Heart right ventricle (tissue), 16 donors: ENCODE measurements at regions of chr1 and their contacts with region 1.

Region 1: DNA sequence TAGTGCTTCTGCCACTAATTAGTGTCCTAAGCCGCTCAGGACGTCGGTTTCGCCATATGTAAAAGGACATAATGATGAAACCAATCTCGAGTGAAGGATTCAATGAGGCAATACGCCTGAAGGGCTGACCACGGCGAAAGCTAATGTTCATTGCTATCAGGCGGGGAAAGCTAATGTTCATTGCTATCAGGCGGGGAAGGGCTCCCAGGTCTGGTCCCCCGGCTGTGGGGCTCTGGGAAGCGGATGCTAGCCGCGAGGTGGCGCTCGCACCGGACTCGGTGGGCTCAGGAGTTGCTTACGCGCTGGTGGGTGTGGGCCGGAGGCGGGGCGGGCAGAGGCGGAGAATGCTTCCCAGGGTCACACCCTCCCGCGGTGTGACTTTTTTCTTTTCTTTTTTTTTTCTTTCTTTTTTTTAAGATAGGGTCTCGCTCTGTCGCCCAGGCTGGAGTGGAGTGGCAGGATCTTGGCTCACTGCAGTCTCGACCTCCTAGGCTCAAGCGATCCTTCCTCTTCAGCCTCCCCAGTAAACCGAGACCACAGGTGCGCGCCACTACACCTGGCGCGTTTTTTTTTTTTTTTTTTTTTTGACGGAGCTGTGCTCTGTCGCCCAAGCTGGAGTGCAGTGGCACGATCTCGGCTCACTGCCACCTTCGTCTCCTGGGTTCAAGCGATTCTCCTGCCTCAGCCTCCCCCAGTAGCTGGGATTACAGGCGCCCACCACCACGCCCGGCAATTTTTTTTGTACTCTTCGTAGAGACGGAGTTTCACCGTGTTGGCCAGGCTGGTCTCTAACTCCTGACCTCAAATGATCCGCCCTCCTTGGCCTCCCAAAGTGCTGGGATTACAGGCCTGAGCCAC is 1.1 kb upstream of the PEAR1 start:
- DNase-seq: peak; percentile 94 to 95
- ATAC-seq: peak; percentile 84 to 91 (median 88)
- H3K4me3 ChIP-seq: peak overlapping the region; percentile 10 to 82 (median 68)
- H3K27ac ChIP-seq: peak overlapping the region; percentile 9 to 98 (median 93)
- H3K4me1 ChIP-seq: peaks cover 12 to 56% (median 45%) of the 10 kb centered on the region in 9 donors
- H3K27me3 ChIP-seq: peaks cover 0 to 43% (median 9%) of the 10 kb centered on the region in 7 donors
- CTCF ChIP-seq: peak; percentile 82 to 98 (median 89)

Region 2: GRCh38 chr1:156500797-156501499 is 391.5 kb before region 1 on chr1:
- intact Hi-C with region 1: loop called in 1 of 10 experiments (anchors 5 kb)
- DNase-seq: peak; percentile 95 to 96
- ATAC-seq: peak; percentile 65 to 90 (median 80)
- H3K4me3 ChIP-seq: peak overlapping the region; percentile 71 to 100 (median 94)
- H3K27ac ChIP-seq: peak overlapping the region; percentile 97 to 100 (median 100)
- H3K4me1 ChIP-seq: peaks cover 44 to 76% (median 72%) of the 10 kb centered on the region in 9 donors
- H3K27me3 ChIP-seq: no peaks in the 10 kb centered on the region
- CTCF ChIP-seq: peak; percentile 7 to 75 (median 63)

Region 3: GRCh38 chr1:156689035-156689952 is 203.1 kb before region 1 on chr1:
- intact Hi-C with region 1: loop called in 6 of 10 experiments (anchors 1 to 10 kb)
- DNase-seq: peak; percentile 71 to 74
- ATAC-seq: peak; percentile 82 to 94 (median 91)
- H3K4me3 ChIP-seq: peak overlapping the region in 4 of 10 donors; percentile 1 to 36 (median 17)
- H3K27ac ChIP-seq: no peak overlapping the region
- H3K4me1 ChIP-seq: peaks cover 0 to 26% (median 17%) of the 10 kb centered on the region in 9 donors
- H3K27me3 ChIP-seq: peaks cover 0 to 90% (median 52%) of the 10 kb centered on the region in 7 donors
- CTCF ChIP-seq: peak; percentile 87 to 96 (median 93)

Region 4: GRCh38 chr1:156797212-156797871 is 95.1 kb before region 1 on chr1:
- intact Hi-C with region 1: loop called in 1 of 10 experiments (anchors 2 kb)
- DNase-seq: no peak
- ATAC-seq: peak in 2 of 8 donors; percentile 26 to 31
- H3K4me3 ChIP-seq: no peak overlapping the region
- H3K27ac ChIP-seq: no peak overlapping the region
- H3K4me1 ChIP-seq: peaks cover 2 to 25% (median 21%) of the 10 kb centered on the region in 9 donors
- H3K27me3 ChIP-seq: no peaks in the 10 kb centered on the region
- CTCF ChIP-seq: peak; percentile 47 to 75 (median 71)

Region 5: GRCh38 chr1:156920233-156921052 is 28.0 kb after region 1 on chr1 and contains the start of gene LRRC71:
- intact Hi-C with region 1: loop called in 7 of 10 experiments (anchors 1 to 5 kb)
- DNase-seq: peak; percentile 82 to 90
- ATAC-seq: peak; percentile 93 to 97 (median 95)
- H3K4me3 ChIP-seq: peak within 1 kb of the TSS in 6 of 10 donors; percentile 23 to 35 (median 26)
- H3K27ac ChIP-seq: no peak within 1 kb of the TSS
- H3K4me1 ChIP-seq: peaks cover 8 to 30% (median 22%) of the 10 kb centered on the region in 9 donors
- H3K27me3 ChIP-seq: peaks cover 27 to 67% (median 51%) of the 10 kb centered on the region in 7 donors
- CTCF ChIP-seq: peak; percentile 72 to 96 (median 93)
- total RNA-seq, gene LRRC71: 0.15 to 0.38 (median 0.35) TPM in 3 of 10 donors, not detected in the others

Region 6: DNA sequence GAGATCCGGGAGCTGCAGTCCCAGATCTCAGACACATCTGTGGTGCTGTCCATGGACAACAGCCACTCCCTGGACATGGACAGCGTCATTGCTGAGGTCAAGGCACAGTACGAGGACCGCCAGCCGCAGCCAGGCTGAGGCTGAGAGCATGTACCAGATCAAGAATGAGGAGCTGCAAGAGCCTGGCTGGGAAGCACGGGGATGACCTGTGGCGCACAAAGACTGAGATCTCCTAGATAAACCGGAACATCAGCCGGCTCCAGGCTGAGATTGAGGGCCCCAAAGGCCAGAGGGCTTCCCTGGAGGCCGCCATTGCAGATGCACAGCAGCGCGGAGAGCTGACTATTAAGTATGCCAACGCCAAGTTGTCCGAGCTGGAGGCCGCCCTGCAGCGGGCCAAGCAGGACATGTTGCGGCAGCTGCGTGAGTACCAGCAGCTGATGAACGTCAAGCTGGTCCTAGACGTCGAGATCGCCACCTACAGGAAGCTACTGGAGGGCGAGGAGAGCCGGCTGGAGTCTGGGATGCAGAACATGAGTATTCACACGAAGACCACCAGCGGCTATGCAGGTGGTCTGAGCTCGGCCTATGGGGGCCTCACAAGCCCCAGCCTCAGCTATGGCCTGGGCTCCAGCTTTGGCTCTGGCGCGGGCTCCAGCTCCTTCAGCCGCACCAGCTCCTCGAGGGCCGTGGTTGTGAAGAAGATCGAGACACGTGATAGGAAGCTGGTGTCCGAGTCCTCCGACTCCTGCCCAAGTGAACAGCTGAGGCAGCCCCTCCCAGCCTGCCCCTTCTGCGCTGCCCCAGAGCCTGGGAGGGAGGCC is 181.7 kb after region 1 on chr1:
- intact Hi-C with region 1: loop called in 1 of 10 experiments (anchors 5 kb)
- DNase-seq: peak; percentile 66 to 70
- ATAC-seq: peak in 5 of 8 donors; percentile 23 to 79 (median 64)
- H3K4me3 ChIP-seq: peak overlapping the region in 6 of 10 donors; percentile 6 to 47 (median 20)
- H3K27ac ChIP-seq: no peak overlapping the region
- H3K4me1 ChIP-seq: peaks cover 0 to 8% (median 4%) of the 10 kb centered on the region in 9 donors
- H3K27me3 ChIP-seq: peaks cover 0 to 57% (median 4%) of the 10 kb centered on the region in 7 donors
- CTCF ChIP-seq: peak; percentile 36 to 84 (median 72)